Heart left ventricle (tissue), 16 donors: ENCODE measurements at regions of chr7 and their contacts with region 1.

Region 1: GRCh38 chr7:139153832-139154231 is 44.3 kb upstream of the ZC3HAV1 start:
- DNase-seq: no peak
- ATAC-seq: no peak
- H3K4me3 ChIP-seq: no peak overlapping the region
- H3K27ac ChIP-seq: no peak overlapping the region
- H3K4me1 ChIP-seq: peaks cover 0 to 5% (median 0%) of the 10 kb centered on the region in 12 donors
- H3K27me3 ChIP-seq: no peaks in the 10 kb centered on the region
- CTCF ChIP-seq: no peak
- POLR2A ChIP-seq: no peak

Region 2: GRCh38 chr7:138935465-138936011 is 218.3 kb before region 1 on chr7:
- intact Hi-C with region 1: no loop called
- DNase-seq: peak in 1 of 5 donors; percentile 38
- ATAC-seq: peak; percentile 58 to 89 (median 76)
- H3K4me3 ChIP-seq: no peak overlapping the region
- H3K27ac ChIP-seq: peak overlapping the region in 7 of 12 donors; percentile 6 to 50 (median 26)
- H3K4me1 ChIP-seq: peaks cover 0 to 18% (median 11%) of the 10 kb centered on the region in 12 donors
- H3K27me3 ChIP-seq: no peaks in the 10 kb centered on the region
- CTCF ChIP-seq: no peak
- POLR2A ChIP-seq: no peak

Region 3: DNA sequence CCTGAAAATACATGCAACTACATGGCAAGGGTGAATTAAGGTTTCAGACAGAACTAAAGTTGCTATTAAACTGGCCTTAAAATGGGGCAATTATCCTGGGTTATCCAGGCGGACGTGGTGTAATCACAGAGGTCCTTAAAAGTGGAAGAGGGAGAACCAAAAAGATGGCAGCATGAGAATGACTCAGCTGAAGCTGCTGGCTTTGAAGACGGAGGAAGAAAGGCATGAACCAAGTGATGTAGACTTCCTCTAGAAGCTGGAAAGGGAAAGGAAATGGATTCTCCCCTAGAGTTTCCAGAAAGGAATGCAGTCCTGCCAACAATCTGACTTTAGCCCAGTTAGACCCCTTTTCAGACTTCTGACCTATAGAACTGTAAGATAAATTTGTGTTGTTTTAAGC is 50.2 kb after region 1 on chr7:
- intact Hi-C with region 1: loop called in 1 of 10 experiments (anchors 5 kb)
- DNase-seq: no peak
- ATAC-seq: no peak
- H3K4me3 ChIP-seq: no peak overlapping the region
- H3K27ac ChIP-seq: no peak overlapping the region
- H3K4me1 ChIP-seq: no peaks in the 10 kb centered on the region
- H3K27me3 ChIP-seq: no peaks in the 10 kb centered on the region
- CTCF ChIP-seq: no peak
- POLR2A ChIP-seq: no peak